Astrocyte of the cerebellum (primary cell): ENCODE measurements at regions of chr10 and their contacts with region 1.

Region 1: DNA sequence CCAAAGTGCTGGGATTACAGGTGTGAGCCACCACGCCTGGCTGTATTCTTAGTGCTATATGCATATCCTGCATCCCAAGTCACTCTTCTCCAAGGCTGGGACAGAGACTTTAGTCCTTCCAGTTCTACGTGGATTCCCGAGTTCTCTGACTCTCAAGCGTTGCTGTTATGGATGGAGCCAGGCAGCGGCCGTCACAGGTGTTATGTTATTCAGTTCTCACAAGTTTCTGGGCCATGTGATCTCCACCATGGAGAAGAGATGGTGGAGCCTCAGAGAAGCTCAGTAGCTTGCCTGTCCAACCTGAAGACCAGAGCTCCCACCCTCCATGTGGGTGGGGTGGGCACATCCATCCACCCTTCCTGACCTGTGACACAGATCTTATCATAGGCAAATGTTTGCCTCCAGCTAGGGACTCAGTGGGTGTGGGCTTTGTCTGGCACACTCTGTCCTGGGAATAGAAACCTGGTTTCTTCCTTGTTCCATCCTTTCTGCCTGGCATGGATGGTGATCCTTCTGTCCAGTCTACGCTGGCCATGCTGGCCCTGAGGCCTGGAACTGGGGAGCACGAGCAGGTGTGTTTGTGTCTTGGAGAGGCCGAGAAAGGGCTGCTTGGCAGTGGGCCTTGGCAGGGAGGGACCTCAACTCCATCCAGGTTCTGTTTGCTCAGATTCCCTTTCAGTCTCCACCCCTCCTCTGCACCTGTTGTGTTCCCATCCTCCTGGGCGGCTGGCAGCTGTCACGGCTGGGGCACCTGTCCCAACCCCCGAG is 55.3 kb downstream of the NEURL1 start:
- DNase-seq: no peak
- H3K4me3 ChIP-seq: no peak overlapping the region
- CTCF ChIP-seq: no peak

Region 2: GRCh38 chr10:103512196-103512990 is 36.4 kb before region 1 on chr10:
- in situ Hi-C with region 1: loop called (anchors 5 kb)
- DNase-seq: no peak
- H3K4me3 ChIP-seq: no peak overlapping the region
- CTCF ChIP-seq: no peak

Region 3: GRCh38 chr10:103584216-103585010 is 35.6 kb after region 1 on chr10:
- in situ Hi-C with region 1: no loop called
- DNase-seq: no peak
- H3K4me3 ChIP-seq: no peak overlapping the region
- CTCF ChIP-seq: no peak